ENCODE measurements at regions of chr21 and their contacts with region 1.

Region 1: DNA sequence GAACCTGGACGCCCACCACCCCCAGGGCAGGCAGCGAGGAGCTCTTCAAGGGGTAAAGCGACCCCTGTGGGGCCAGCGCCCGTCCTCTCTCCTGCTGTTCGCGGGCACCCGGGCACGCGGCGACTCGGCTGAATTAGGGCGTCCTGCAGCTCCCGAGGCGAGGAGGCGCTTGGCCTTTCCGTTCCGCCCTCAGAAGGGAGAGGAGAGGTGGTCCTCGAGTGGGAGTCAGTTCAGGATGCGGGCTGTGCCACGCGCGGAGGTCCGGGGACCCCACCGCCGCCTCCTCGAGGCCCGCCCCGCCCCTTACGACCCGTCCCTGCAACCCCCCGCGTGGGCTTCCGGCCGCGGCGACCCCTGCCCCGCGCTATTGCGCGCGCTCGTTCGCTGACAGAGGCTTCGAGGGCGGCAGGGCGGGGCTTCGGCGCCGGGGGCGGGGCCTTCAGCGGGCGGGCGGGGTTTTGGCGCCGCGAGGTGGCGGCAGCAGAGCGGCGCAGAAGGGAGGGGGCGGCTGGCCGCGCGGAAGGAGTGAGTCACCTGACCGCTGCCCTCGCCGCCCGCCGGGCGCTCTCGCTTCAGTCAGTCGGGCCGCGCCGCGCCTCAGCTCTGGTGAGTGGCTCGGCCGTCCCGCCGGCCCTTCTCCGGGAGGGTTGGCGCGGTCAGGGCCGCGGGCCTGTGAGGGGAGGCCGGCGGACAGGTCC is at the start of gene BACH1:
- DNase-seq: peak; percentile 83
- H3K4me3 ChIP-seq: peak within 1 kb of the TSS; percentile 57 to 78 (median 74)
- H3K27ac ChIP-seq: peak within 1 kb of the TSS; percentile 89
- H3K4me1 ChIP-seq: peaks cover 37% of the 10 kb centered on the region
- H3K27me3 ChIP-seq: no peaks in the 10 kb centered on the region
- CTCF ChIP-seq: peak; percentile 22 to 53
- total RNA-seq, gene BACH1: 38.8 to 45.7 TPM

Region 2: DNA sequence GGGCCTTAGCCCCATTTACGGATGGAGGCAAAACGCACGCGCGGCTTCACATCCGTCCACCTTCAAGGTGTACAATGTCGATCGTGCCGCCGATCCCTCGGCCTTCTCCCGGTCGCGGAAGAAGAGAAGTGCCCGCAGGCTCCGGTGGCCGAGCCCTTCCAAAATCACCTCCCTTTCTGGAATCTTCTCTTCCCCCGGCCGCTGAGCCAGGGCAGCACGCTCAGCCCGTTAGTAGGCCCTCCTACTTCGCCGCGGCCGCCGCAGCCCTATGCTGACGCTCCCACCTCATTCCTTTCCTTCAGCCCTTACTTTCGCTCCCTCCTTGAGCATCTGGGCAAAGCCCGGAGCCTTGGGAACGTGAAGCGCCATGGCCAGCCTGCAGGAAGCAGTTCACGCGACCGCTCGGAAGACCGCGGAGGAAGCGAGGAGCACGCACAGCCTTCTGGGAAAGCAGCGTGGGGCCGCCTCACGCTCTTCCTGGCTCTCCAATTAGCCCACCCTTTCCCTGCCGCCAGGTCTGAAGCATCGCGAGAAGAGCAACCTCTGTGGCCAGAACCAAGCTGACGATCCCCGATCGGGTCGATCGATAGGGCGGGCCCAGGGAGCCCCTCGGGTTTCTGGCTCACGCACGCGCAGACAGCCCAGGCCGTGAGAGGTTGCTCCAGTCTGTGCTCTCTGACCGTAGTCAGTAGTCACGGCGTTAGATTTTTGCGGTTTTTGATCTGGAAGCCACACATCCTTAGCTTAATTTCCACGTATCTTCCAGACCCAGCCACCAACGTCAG is 225.1 kb before region 1 on chr21 and contains the start of gene CCT8:
- CTCF ChIA-PET with region 1: interaction called, 3 read pairs
- dilution Hi-C with region 1: no loop called
- in situ Hi-C with region 1: no loop called
- intact Hi-C with region 1: loop called (anchors 5 kb)
- DNase-seq: peak; percentile 99
- H3K4me3 ChIP-seq: peak within 1 kb of the TSS; percentile 75 to 91 (median 88)
- H3K27ac ChIP-seq: peak within 1 kb of the TSS; percentile 87
- H3K4me1 ChIP-seq: peaks cover 24% of the 10 kb centered on the region
- H3K27me3 ChIP-seq: no peaks in the 10 kb centered on the region
- CTCF ChIP-seq: no peak
- total RNA-seq, gene CCT8: 124 to 195 TPM

Region 3: DNA sequence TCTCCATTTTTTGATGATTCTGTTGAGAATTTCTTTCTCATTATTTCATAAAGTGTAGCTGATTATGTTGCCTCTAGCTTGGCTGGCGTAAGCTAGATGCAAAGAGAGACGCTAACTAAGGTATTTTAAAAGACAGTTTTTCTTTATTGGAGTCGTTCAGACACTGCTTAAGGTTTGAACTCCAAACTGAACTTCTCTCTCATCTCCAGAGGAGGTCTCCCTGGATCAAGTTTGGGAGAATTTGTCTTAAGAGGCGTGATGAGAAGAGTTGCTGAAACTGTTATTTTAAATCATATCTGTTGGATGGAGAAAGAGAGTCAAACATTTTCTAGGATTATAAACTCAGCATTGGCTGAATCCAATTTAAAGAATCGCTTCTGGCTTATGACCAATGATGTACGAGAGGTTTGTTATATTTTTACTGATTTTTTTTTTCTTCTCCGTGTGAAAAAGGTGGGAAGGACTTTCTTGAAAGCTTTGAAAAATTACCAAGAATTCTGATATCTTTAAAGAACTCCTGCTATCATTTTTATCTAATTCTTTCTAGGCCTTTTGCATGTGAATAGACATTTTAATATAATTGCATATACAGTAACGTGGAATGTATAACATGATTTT is 134.1 kb before region 1 on chr21:
- CTCF ChIA-PET with region 1: no interaction called
- dilution Hi-C with region 1: no loop called
- in situ Hi-C with region 1: loop called in 1 of 2 experiments (anchors 10 kb)
- intact Hi-C with region 1: loop called (anchors 1 kb)
- DNase-seq: peak; percentile 68
- H3K4me3 ChIP-seq: no peak overlapping the region
- H3K27ac ChIP-seq: peak overlapping the region; percentile 19
- H3K4me1 ChIP-seq: peaks cover 23% of the 10 kb centered on the region
- H3K27me3 ChIP-seq: no peaks in the 10 kb centered on the region
- CTCF ChIP-seq: peak; percentile 63 to 78

Region 4: DNA sequence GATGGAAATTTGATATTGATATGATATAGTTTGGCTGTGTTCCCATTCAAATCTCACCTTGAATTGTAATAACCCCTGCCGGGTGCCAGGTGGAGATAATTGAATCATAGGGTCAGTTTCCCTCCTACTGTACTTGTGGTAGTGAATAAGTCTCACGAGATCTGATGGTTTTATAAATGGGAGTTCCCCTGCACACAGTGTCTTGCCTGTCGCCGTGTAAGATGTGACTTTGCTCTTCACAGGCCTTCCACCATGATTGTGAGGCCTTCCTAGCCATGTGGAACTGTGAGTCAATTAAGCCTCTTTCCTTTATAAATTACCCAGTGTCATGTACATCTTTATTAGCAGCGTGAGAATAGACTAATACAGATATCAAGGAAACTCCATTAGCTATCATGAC is 93.5 kb before region 1 on chr21:
- CTCF ChIA-PET with region 1: no interaction called
- dilution Hi-C with region 1: no loop called
- in situ Hi-C with region 1: no loop called
- intact Hi-C with region 1: no loop called
- DNase-seq: no peak
- H3K4me3 ChIP-seq: no peak overlapping the region
- H3K27ac ChIP-seq: no peak overlapping the region
- H3K4me1 ChIP-seq: no peaks in the 10 kb centered on the region
- H3K27me3 ChIP-seq: no peaks in the 10 kb centered on the region
- CTCF ChIP-seq: no peak

Region 5: DNA sequence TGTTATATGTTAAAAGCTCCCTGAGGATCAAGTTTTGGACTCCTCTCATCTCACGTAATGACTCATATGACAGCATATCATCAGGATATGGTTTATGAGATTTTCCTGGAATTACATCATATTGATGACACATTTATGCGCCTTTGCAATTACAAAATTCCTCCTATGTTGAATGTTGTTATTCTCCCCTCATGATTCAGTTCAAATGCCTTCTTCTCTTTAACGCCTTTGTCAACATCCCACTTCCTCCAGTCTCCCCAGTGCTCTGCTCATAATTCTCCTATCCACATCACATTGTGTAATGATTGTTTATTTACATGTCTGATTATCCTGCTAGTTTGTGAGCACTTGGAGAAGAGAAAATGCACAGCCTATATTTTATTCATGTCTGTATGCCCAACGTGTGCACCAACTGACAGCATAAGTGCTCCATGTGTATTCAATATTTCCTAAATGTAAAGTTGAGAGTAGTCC is 80.6 kb before region 1 on chr21:
- CTCF ChIA-PET with region 1: no interaction called
- dilution Hi-C with region 1: no loop called
- in situ Hi-C with region 1: no loop called
- intact Hi-C with region 1: loop called (anchors 5 kb)
- DNase-seq: peak; percentile 94
- H3K4me3 ChIP-seq: no peak overlapping the region
- H3K27ac ChIP-seq: peak overlapping the region; percentile 32
- H3K4me1 ChIP-seq: peaks cover 14% of the 10 kb centered on the region
- H3K27me3 ChIP-seq: no peaks in the 10 kb centered on the region
- CTCF ChIP-seq: no peak

Region 6: GRCh38 chr21:29343519-29343918 is 45.0 kb after region 1 on chr21:
- CTCF ChIA-PET with region 1: no interaction called
- dilution Hi-C with region 1: no loop called
- in situ Hi-C with region 1: no loop called
- intact Hi-C with region 1: loop called (anchors 1 kb)
- DNase-seq: no peak
- H3K4me3 ChIP-seq: no peak overlapping the region
- H3K27ac ChIP-seq: no peak overlapping the region
- H3K4me1 ChIP-seq: peaks cover 45% of the 10 kb centered on the region
- H3K27me3 ChIP-seq: no peaks in the 10 kb centered on the region
- CTCF ChIP-seq: no peak